ENCODE measurements at regions of chr17 and their contacts with region 1.

Region 1: DNA sequence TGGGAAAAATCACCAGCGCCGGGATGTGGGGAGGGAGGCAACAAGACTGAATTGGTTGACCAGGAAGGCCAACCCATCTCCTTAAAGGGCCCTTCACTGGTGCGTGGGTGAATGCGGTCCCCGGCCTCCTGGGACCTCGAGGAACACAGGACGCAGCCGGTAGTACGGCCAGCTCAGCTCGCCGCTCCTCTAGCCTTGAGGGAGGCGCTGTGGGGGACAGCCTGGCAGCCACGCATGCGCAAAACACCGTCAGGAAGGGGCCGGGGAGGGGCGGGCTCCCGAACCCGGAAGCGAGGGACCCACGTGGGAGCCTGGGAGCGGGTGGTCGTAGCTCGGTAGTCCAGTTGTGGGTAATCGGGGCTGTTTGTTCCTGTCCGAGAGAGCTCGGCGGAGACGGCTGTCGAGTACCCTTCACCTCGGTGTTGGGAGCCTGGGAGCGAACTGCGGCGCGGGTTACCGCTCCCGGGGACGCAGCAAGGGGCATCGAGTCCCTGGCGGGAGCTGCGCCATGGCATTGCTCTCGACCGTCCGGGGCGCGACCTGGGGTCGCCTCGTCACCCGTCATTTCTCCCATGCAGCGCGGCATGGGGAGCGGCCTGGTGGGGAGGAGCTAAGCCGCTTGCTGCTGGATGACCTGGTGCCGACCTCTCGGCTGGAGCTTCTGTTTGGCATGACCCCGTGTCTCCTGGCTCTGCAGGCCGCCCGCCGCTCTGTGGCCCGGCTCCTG is at the start of gene MRM1:
- DNase-seq: peak; percentile 100
- H3K4me3 Mint-ChIP-seq: peak within 1 kb of the TSS; percentile 81
- H3K27ac Mint-ChIP-seq: peak within 1 kb of the TSS; percentile 84
- H3K4me1 Mint-ChIP-seq: peaks cover 34% of the 10 kb centered on the region
- H3K27me3 Mint-ChIP-seq: no peaks in the 10 kb centered on the region
- CTCF ChIP-seq: peak; percentile 17
- total RNA-seq, gene MRM1: 42.4 and 43.5 TPM in 2 replicates

Region 2: DNA sequence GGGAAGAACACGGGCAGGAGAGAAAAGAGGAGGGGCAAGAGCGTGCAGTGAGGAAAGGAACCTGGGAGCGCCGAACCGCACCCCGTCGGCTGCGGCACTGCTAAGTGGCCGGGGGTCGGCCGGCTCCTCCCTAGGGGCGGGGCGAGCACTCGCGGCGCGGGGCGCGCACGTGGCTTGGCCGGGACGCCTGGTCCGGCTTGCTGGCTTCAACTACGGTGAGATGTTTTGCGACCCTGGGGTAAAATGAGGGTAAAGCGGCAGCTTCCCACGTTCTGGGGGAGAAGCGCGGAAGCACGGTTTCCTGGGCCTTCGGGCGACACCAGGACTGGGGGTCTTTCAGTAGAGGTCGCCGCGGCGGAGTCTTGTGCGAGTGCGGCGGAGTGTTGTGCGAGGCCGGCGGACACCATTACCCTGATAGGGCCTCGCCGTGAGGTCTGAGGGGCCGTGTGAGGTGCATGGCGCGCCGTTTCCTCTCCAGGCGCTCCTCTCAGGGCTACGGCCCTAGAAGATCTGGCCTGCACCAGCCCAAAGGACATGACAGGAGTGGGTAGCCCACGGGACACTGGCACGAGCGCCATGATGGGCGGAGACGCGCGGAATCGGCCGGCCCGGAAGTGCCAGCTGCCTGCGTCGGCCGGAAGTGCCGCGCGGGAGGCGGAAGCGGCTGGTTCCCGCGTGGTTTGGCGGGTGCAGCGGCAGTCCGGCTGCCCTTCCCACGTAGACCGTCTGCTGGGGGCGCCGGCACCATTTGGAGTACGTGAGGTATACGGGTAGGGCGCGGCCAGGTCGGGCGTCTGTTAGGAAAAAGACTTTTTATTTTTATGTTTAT is 66.4 kb before region 1 on chr17 and contains the starts of genes MYO19 and PIGW:
- CTCF ChIA-PET with region 1: interaction called, 39 read pairs
- intact Hi-C with region 1: no loop called
- DNase-seq: peak; percentile 100
- H3K4me3 Mint-ChIP-seq: peak within 1 kb of the TSS; percentile 99
- H3K27ac Mint-ChIP-seq: peak within 1 kb of the TSS; percentile 93
- H3K4me1 Mint-ChIP-seq: peaks cover 23% of the 10 kb centered on the region
- H3K27me3 Mint-ChIP-seq: no peaks in the 10 kb centered on the region
- CTCF ChIP-seq: peak; percentile 62
- total RNA-seq, gene MYO19: 155 and 156 TPM in 2 replicates
- total RNA-seq, gene PIGW: 71.1 and 78.9 TPM in 2 replicates

Region 3: DNA sequence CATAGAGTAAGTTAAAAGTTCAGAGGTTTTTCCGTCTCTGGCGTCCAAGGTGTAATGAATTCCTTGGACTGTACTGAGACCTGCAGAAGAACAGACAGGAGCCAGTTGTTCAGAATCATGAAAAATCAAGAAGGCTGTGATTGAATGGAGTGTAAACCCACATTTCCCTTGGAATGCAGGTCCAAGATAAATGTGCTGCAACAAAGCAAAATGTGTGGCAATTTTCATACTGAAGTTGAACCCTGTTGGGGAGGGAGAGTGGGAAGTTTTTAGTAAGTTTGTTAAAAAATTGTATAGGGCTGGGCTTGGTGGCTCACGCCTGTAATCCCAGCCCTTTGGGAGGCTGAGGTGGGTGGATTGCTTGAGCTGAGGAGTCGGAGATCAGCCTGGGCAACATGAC is 35.4 kb before region 1 on chr17:
- CTCF ChIA-PET with region 1: interaction called, 13 read pairs
- intact Hi-C with region 1: no loop called
- DNase-seq: no peak
- H3K4me3 Mint-ChIP-seq: no peak overlapping the region
- H3K27ac Mint-ChIP-seq: peak overlapping the region; percentile 27
- H3K4me1 Mint-ChIP-seq: no peaks in the 10 kb centered on the region
- H3K27me3 Mint-ChIP-seq: no peaks in the 10 kb centered on the region
- CTCF ChIP-seq: no peak

Region 4: DNA sequence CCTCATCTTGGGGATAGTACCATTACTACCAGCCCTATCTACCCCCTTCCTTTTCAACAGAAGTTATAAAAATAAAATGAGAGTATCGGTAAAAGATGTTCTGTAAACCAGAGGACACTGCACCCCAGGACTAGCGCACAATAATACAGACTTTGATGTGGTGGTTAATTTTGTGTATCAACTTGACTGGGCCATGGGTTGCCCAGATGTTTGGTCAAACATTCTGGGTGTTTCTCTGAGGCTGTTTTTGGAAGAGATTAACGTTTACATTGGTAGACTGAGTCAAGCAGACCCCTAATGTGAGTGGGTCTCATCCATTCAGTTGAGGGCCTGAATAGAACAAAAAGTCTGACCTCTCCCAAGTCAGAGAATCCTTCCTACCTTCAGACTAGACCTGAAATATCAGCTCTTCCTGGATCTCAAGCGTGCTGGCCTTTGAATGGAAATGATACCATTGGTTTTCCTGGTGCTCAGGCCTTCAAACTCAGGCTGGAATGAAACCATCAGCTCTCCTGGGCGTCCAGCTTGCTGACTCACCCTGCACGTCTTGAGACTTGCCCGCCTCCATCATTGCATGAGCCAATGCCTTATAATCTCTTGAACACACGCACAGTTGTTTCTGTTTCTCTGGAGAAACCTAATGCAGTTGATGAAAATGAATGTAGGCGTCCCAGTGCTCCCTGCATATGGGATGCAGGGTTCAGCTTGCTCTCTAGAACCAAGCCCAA is 10.0 kb after region 1 on chr17:
- CTCF ChIA-PET with region 1: interaction called, 67 read pairs
- intact Hi-C with region 1: no loop called
- DNase-seq: no peak
- H3K4me3 Mint-ChIP-seq: no peak overlapping the region
- H3K27ac Mint-ChIP-seq: no peak overlapping the region
- H3K4me1 Mint-ChIP-seq: no peaks in the 10 kb centered on the region
- H3K27me3 Mint-ChIP-seq: no peaks in the 10 kb centered on the region
- CTCF ChIP-seq: no peak

Region 5: DNA sequence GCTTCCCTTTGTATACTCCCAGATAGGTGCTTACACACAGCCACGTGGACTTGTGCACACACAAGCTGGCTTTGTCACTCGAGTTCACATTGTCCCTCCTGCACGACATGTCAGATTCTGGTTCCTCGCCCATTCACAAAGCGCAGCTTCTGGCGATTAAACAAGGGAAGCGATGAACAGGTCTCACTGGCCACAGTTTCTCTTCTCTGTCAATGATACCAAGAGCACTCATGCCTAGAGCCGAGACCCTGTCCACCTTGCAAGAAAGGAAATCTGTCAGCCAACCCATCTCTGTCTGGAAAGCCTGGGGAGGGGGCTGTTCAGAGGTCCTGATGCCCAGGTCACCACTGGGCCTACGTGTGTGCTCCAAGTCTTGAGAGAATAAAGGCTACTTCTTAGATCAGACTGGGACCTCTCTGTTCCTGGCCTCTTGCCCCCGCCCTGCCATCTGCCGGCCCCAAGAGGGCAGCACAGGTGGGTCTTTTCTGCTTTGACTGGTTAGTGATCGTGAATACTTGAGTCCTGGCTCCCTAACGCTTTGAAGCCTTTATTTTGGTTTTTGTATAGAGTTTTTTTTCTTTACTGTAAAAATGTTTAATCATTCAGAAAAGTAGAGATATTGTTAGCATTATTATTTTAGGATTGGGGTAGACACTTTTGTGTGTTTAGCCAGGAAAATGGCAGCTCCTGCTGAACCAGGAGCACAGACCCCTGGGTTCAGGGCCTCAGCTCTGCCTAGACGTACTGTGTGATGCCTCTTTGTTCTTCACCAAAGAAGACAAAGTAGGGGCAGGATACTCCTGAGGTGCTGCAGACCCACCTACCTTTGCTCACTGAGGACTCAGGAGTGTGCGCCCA is 104.6 kb after region 1 on chr17:
- CTCF ChIA-PET with region 1: interaction called, 14 read pairs
- intact Hi-C with region 1: no loop called
- DNase-seq: peak; percentile 90
- H3K4me3 Mint-ChIP-seq: no peak overlapping the region
- H3K27ac Mint-ChIP-seq: no peak overlapping the region
- H3K4me1 Mint-ChIP-seq: no peaks in the 10 kb centered on the region
- H3K27me3 Mint-ChIP-seq: peaks cover 93% of the 10 kb centered on the region
- CTCF ChIP-seq: peak; percentile 99

Region 6: DNA sequence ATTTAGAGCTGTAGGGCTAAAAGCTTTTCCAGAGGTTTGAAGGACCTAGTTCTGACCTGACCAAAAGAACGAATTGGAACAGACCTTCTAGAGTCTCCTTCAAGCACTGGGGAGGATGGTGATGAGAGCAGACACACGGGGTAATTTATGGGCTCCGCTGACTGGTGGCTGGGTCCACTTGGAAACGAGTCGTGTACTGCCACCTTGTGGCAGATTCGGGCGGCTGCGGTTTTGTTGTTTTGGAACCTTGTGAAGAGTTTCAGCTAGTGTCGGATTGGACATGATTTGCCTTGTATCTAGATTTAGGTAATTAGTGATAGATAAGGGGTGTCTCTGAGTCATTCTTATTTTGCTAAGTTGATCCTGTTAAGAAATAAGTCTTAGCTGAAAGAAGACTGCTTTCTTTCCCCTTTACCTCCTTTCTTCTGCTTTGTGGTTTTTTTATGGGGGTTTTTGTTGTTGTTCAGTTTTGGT is 446.2 kb after region 1 on chr17:
- CTCF ChIA-PET with region 1: interaction called, 17 read pairs
- intact Hi-C with region 1: no loop called
- DNase-seq: peak; percentile 95
- H3K4me3 Mint-ChIP-seq: no peak overlapping the region
- H3K27ac Mint-ChIP-seq: no peak overlapping the region
- H3K4me1 Mint-ChIP-seq: peaks cover 7% of the 10 kb centered on the region
- H3K27me3 Mint-ChIP-seq: no peaks in the 10 kb centered on the region
- CTCF ChIP-seq: peak; percentile 100

Region 7: GRCh38 chr17:37239690-37240334 is 638.3 kb after region 1 on chr17:
- CTCF ChIA-PET with region 1: interaction called, 11 read pairs
- intact Hi-C with region 1: no loop called
- DNase-seq: no peak
- H3K4me3 Mint-ChIP-seq: no peak overlapping the region
- H3K27ac Mint-ChIP-seq: no peak overlapping the region
- H3K4me1 Mint-ChIP-seq: peaks cover 11% of the 10 kb centered on the region
- H3K27me3 Mint-ChIP-seq: no peaks in the 10 kb centered on the region
- CTCF ChIP-seq: peak; percentile 94

Measured in Calu3 (cell line).